ENCODE measurements at regions of chr4 and their contacts with region 1.

Region 1: GRCh38 chr4:54322818-54323417 is 93.8 kb downstream of the PDGFRA start:
- DNase-seq: peak; percentile 68
- H3K4me3 ChIP-seq: no peak overlapping the region
- H3K27ac ChIP-seq: no peak overlapping the region
- H3K4me1 ChIP-seq: no peaks in the 10 kb centered on the region
- CTCF ChIP-seq: peak; percentile 85

Region 2: GRCh38 chr4:53622739-53623151 is 700.2 kb before region 1 on chr4:
- CTCF ChIA-PET with region 1: no interaction called
- POLR2A ChIA-PET with region 1: no interaction called
- intact Hi-C with region 1: no loop called
- DNase-seq: no peak
- H3K4me3 ChIP-seq: no peak overlapping the region
- H3K27ac ChIP-seq: no peak overlapping the region
- H3K4me1 ChIP-seq: no peaks in the 10 kb centered on the region
- CTCF ChIP-seq: no peak

Region 3: GRCh38 chr4:53997901-53998300 is 325.0 kb before region 1 on chr4:
- CTCF ChIA-PET with region 1: no interaction called
- POLR2A ChIA-PET with region 1: no interaction called
- intact Hi-C with region 1: no loop called
- DNase-seq: no peak
- H3K4me3 ChIP-seq: no peak overlapping the region
- H3K27ac ChIP-seq: no peak overlapping the region
- H3K4me1 ChIP-seq: no peaks in the 10 kb centered on the region
- CTCF ChIP-seq: no peak

Region 4: GRCh38 chr4:54197926-54198325 is 125.0 kb before region 1 on chr4:
- CTCF ChIA-PET with region 1: no interaction called
- POLR2A ChIA-PET with region 1: no interaction called
- intact Hi-C with region 1: no loop called
- DNase-seq: no peak
- H3K4me3 ChIP-seq: no peak overlapping the region
- H3K27ac ChIP-seq: no peak overlapping the region
- H3K4me1 ChIP-seq: no peaks in the 10 kb centered on the region
- CTCF ChIP-seq: no peak

Region 5: DNA sequence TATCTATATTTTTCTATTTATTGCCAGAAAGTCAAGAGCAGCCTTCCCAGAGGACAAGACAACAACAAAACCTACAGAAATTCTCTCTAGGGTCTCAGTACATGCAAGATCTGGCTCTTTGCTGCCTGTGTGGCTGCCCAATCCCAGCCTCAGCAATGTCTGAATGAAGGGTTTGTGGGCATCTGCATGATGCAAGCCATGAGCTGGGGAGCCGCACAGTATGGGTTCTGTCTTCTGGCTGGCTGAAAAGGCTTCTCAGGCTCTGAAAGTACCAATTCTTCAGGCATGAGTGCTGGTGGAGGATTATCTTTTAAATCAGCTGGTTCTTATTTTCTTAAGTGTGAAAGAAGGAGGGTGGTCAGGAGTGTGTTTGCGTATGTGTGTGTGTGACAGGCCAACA is 10.7 kb after region 1 on chr4:
- CTCF ChIA-PET with region 1: no interaction called
- POLR2A ChIA-PET with region 1: no interaction called
- intact Hi-C with region 1: no loop called
- DNase-seq: no peak
- H3K4me3 ChIP-seq: no peak overlapping the region
- H3K27ac ChIP-seq: no peak overlapping the region
- H3K4me1 ChIP-seq: no peaks in the 10 kb centered on the region
- CTCF ChIP-seq: no peak

Region 6: DNA sequence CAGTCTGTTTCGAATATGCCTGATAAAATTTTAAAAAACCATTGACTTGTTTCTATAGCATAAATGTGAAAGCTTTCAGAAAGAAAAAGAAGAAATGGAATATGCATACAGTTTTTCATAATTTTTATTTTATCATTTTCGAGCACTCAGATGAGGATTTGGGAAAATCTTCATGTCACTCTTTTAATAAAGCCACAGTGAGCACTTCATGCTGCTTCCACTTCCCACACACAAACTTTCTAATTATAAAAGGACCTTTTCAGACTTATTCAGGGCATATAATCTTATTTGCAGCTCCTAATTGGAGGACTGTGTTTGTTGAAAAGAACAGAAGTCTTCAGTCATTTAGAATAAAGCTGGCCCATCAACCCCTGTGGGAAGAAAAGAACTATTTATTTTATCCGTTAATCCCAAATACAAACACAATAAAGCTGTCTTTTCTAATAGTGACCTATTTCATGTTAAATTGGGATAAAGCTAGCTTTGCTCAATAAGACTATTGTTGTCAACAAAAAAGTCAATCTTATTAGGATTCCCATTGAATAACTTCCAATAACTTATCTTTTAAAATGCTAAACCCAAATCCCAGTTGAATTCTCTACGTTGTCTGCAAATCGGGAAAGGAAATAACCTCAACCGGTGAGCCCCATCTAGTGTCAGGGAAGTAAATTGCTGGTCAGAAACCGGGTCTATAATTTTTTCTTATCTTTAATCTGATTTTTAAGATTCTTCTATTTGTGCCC is 117.6 kb after region 1 on chr4:
- CTCF ChIA-PET with region 1: no interaction called
- POLR2A ChIA-PET with region 1: no interaction called
- intact Hi-C with region 1: loop called (anchors 5 kb)
- DNase-seq: peak; percentile 9
- H3K4me3 ChIP-seq: no peak overlapping the region
- H3K27ac ChIP-seq: no peak overlapping the region
- H3K4me1 ChIP-seq: no peaks in the 10 kb centered on the region
- CTCF ChIP-seq: peak; percentile 78

Region 7: GRCh38 chr4:54961357-54961975 is 638.5 kb after region 1 on chr4:
- CTCF ChIA-PET with region 1: no interaction called
- POLR2A ChIA-PET with region 1: no interaction called
- intact Hi-C with region 1: loop called (anchors 5 kb)
- DNase-seq: peak; percentile 34
- H3K4me3 ChIP-seq: no peak overlapping the region
- H3K27ac ChIP-seq: no peak overlapping the region
- H3K4me1 ChIP-seq: no peaks in the 10 kb centered on the region
- CTCF ChIP-seq: peak; percentile 79